Tibial artery (tissue), 4 donors: ENCODE measurements at regions of chr3 and their contacts with region 1.

Region 1: DNA sequence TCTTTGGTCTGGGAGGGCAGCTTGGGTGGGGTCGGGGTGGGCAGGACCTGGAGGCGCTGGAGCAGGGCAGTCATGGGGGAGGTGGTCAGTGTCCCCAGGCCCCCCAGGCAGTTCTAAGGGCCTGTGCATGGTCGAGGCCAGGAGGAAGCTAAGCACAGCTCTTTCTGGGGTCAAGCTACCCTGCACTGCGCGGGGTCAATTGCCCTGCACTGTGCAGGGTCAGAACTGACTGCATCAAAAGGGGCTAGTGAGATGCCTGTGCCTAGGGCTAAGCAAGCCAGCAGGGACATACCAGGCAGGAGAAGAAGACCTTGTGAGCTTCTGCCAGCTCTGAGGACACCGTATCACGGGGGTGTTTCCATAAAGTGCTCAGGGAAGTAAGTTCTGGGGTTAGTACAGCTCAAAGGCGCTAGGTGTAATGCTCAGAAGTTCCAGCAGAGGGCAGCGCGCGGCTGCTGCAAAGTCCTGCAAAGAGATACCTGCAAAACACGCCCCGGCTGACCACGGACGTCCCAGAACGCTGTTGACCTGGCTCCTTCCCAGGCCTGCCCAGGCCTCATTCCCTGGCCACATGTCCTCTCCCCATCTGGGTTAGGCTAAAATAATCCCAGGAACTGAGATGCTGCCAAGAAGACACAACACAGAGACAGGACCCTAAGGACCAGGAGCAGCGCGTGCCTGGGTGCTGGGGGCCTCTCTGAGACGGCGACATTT is 18.8 kb upstream of the IQSEC1 start:
- DNase-seq: peak; percentile 84 to 89
- H3K4me3 ChIP-seq: no peak overlapping the region
- H3K27ac ChIP-seq: no peak overlapping the region
- H3K4me1 ChIP-seq: peaks cover 0 to 18% (median 13%) of the 10 kb centered on the region in 4 donors
- H3K27me3 ChIP-seq: no peaks in the 10 kb centered on the region
- CTCF ChIP-seq: peak; percentile 96 to 98

Region 2: GRCh38 chr3:13282986-13283876 is 191.2 kb after region 1 on chr3:
- intact Hi-C with region 1: loop called (anchors 10 kb)
- DNase-seq: peak in 1 of 2 donors; percentile 33
- H3K4me3 ChIP-seq: peak overlapping the region; percentile 40 to 53
- H3K27ac ChIP-seq: no peak overlapping the region
- H3K4me1 ChIP-seq: peaks cover 0 to 18% (median 11%) of the 10 kb centered on the region in 4 donors
- H3K27me3 ChIP-seq: peaks cover 0 to 64% of the 10 kb centered on the region in 2 donors
- CTCF ChIP-seq: peak in 1 of 2 experiments; percentile 19

Region 3: GRCh38 chr3:13364602-13365271 is 272.7 kb after region 1 on chr3:
- intact Hi-C with region 1: no loop called
- DNase-seq: no peak
- H3K4me3 ChIP-seq: no peak overlapping the region
- H3K27ac ChIP-seq: no peak overlapping the region
- H3K4me1 ChIP-seq: no peaks in the 10 kb centered on the region
- H3K27me3 ChIP-seq: no peaks in the 10 kb centered on the region
- CTCF ChIP-seq: no peak

Region 4: GRCh38 chr3:13648060-13649001 is 556.3 kb after region 1 on chr3:
- intact Hi-C with region 1: loop called (anchors 10 kb)
- DNase-seq: peak; percentile 85 to 88
- H3K4me3 ChIP-seq: no peak overlapping the region
- H3K27ac ChIP-seq: no peak overlapping the region
- H3K4me1 ChIP-seq: peaks cover 0 to 19% (median 15%) of the 10 kb centered on the region in 4 donors
- H3K27me3 ChIP-seq: peaks cover 0 to 17% of the 10 kb centered on the region in 2 donors
- CTCF ChIP-seq: peak; percentile 94 to 97